T-cell (primary cell): ENCODE measurements at regions of chr5 and their contacts with region 1.

Region 1: GRCh38 chr5:23419115-23419514 is 88.3 kb upstream of the PRDM9 start:
- DNase-seq: no peak
- ATAC-seq: no peak
- H3K4me3 ChIP-seq: no peak overlapping the region
- H3K4me3 Mint-ChIP-seq: no peak overlapping the region
- H3K27ac ChIP-seq: no peak overlapping the region
- H3K27ac Mint-ChIP-seq: no peak overlapping the region
- H3K4me1 ChIP-seq: no peaks in the 10 kb centered on the region
- H3K4me1 Mint-ChIP-seq: no peaks in the 10 kb centered on the region
- H3K27me3 ChIP-seq: no peaks in the 10 kb centered on the region
- H3K27me3 Mint-ChIP-seq: no peaks in the 10 kb centered on the region

Region 2: GRCh38 chr5:25029004-25029403 is 1609.9 kb after region 1 on chr5:
- CTCF ChIA-PET with region 1: no interaction called
- POLR2A ChIA-PET with region 1: interaction called in 1 of 2 experiments, 11 read pairs
- DNase-seq: no peak
- ATAC-seq: no peak
- H3K4me3 ChIP-seq: no peak overlapping the region
- H3K4me3 Mint-ChIP-seq: no peak overlapping the region
- H3K27ac ChIP-seq: no peak overlapping the region
- H3K27ac Mint-ChIP-seq: no peak overlapping the region
- H3K4me1 ChIP-seq: no peaks in the 10 kb centered on the region
- H3K4me1 Mint-ChIP-seq: no peaks in the 10 kb centered on the region
- H3K27me3 ChIP-seq: no peaks in the 10 kb centered on the region
- H3K27me3 Mint-ChIP-seq: no peaks in the 10 kb centered on the region